ENCODE measurements at regions of chr10 and their contacts with region 1.

Region 1: DNA sequence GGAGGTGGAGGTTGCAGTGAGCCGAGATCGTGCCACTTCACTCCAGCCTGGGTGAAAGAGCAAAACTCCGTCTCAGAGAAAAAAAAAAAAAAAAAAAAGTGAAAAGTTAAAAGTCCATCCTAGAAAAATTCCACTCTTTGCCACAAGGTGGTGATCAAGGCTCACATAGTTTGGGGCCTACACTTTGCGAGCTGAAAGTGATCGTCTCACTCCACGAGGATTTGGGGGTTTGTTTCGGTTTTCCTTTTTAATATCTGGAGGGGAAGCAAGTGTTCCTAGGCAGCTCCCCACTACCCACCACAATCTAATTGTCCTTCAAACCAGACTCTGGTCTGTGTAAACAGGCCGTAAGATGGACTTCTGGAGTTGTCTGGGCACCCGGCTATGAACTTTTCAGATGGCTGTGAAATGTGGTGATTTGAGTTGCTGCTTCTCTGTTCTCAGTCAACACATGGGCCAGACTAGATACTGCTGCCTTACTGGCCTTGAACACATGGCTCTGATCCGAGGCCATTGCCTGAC is 27.1 kb downstream of the PRLHR start:
- DNase-seq: no peak

Region 2: GRCh38 chr10:118720685-118721538 is 152.5 kb after region 1 on chr10:
- intact Hi-C with region 1: loop called (anchors 1 kb)
- DNase-seq: no peak

Region 3: DNA sequence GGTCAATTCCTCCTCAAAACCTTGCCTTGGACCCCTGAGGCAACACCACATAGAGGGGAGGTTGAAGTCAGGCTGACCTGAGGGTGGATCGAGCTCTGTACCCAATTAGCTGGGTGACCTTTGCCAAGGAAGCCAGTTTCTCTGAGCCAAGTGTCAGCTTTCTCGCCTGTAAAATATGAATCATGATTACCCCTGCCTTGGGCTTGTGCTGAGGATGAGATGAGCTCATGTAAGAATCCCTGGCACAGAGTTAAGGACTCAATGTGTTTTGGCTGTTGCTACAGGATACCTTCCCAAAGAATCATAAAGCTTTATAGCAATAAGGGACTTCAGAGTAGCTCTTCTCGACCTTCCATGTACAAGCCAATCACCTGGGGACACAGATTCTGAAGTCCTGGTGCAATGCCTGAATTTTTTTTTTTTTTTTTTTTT is 229.9 kb after region 1 on chr10:
- intact Hi-C with region 1: loop called (anchors 2 kb)
- DNase-seq: no peak

Measured in cardiac septum (tissue), 1 donor.